Mammary epithelial cell (primary cell): ENCODE measurements at regions of chr7 and their contacts with region 1.

Region 1: GRCh38 chr7:152152267-152152666 is 126.8 kb downstream of the GALNT11 start:
- DNase-seq: no peak
- H3K4me3 ChIP-seq: no peak overlapping the region
- H3K27ac ChIP-seq: no peak overlapping the region
- H3K4me1 ChIP-seq: no peaks in the 10 kb centered on the region
- H3K27me3 ChIP-seq: no peaks in the 10 kb centered on the region
- CTCF ChIP-seq: no peak

Region 2: GRCh38 chr7:152050547-152050971 is 101.7 kb before region 1 on chr7:
- CTCF ChIA-PET with region 1: no interaction called
- dilution Hi-C with region 1: no loop called
- in situ Hi-C with region 1: no loop called
- intact Hi-C with region 1: no loop called
- DNase-seq: peak; percentile 62
- H3K4me3 ChIP-seq: peak overlapping the region in 1 of 3 experiments; percentile 22
- H3K27ac ChIP-seq: peak overlapping the region; percentile 23
- H3K4me1 ChIP-seq: peaks cover 25% of the 10 kb centered on the region
- H3K27me3 ChIP-seq: no peaks in the 10 kb centered on the region
- CTCF ChIP-seq: peak in 1 of 2 donors; percentile 1

Region 3: DNA sequence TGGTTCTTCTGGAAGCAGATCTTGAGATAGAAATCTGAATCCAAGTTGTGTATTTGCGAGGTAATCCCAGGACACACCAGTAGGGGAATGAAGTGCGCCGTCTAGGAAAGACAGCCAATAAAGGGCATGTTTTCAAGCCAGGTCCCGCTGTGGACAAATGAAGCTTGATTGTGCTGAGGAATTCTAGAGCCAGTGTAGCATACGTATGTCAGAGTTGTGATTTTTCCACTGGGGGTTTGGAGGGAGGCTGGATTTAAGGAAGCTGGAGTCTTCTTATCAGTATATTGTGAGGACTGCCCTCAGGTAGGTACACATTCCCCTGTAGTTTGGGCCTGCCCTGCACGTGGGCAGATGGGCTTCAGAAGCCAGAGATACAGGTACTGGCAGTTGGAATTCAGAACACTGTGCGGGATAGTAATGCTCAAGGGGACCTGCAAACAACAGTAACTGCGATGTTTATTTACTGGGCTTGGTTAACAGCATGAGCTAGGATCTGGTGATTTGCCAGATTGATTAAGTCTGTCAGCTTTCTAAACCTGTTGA is 75.9 kb before region 1 on chr7:
- CTCF ChIA-PET with region 1: no interaction called
- dilution Hi-C with region 1: loop called (anchors 5 kb)
- in situ Hi-C with region 1: no loop called
- intact Hi-C with region 1: loop called (anchors 5 kb)
- DNase-seq: no peak
- H3K4me3 ChIP-seq: no peak overlapping the region
- H3K27ac ChIP-seq: no peak overlapping the region
- H3K4me1 ChIP-seq: peaks cover 14% of the 10 kb centered on the region
- H3K27me3 ChIP-seq: no peaks in the 10 kb centered on the region
- CTCF ChIP-seq: peak; percentile 38 to 42

Region 4: DNA sequence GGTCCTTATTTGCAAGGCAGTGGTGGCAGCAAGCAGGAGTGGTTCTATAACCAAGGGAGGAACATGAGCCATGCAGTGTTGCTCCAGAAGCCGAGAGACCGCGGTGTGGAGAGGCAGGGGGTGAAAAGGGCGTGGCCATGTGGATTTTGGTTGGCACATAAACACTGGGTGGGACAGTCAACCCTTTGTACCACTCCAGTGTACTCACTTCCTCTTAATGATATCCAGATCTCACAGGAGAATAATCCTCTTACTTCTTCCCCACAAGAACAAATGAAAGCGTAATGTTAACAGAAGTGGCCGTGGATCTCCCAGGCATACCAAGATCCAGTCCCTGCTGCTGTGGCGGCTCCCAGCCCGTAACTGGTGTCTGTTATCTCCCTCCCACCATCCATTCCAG is 481.2 kb after region 1 on chr7:
- CTCF ChIA-PET with region 1: no interaction called
- dilution Hi-C with region 1: no loop called
- in situ Hi-C with region 1: no loop called
- intact Hi-C with region 1: no loop called
- DNase-seq: no peak
- H3K4me3 ChIP-seq: no peak overlapping the region
- H3K27ac ChIP-seq: no peak overlapping the region
- H3K4me1 ChIP-seq: no peaks in the 10 kb centered on the region
- H3K27me3 ChIP-seq: no peaks in the 10 kb centered on the region
- CTCF ChIP-seq: no peak